A673 (cell line): ENCODE measurements at regions of chr7 and their contacts with region 1.

Region 1: GRCh38 chr7:76191783-76192275 is 9.9 kb upstream of the SRRM3 start:
- DNase-seq: peak; percentile 72
- H3K4me3 ChIP-seq: no peak overlapping the region
- H3K27ac ChIP-seq: no peak overlapping the region
- H3K4me1 ChIP-seq: peaks cover 4% of the 10 kb centered on the region
- H3K27me3 ChIP-seq: no peaks in the 10 kb centered on the region
- CTCF ChIP-seq: no peak

Region 2: DNA sequence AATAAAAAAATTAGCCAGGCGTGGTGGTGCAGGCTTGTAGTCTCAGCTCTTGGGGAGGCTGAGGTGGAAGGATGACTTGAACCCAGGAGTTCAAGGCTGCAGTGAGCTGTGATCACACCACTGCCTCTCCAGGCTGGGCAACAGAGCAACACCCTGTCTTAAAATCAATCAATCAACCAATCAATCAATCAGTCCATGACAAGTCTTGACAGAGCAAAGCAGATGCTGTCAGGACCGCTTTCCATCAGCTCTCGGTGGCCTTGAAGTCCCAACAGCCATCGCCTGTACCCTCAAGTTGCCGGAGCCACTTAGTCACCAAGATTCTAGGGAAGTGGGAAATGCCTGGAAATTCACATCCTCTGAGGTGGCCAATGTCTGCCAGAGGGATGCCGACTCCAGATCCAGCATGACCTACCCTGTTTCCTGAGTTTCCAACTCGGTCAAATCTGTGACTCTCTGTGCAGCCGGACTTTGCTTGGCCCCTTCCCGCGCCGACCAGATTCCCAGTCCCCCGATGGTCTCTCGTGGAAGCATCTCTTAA is 377.4 kb before region 1 on chr7:
- CTCF ChIA-PET with region 1: no interaction called
- POLR2A ChIA-PET with region 1: no interaction called
- intact Hi-C with region 1: no loop called
- DNase-seq: no peak
- H3K4me3 ChIP-seq: no peak overlapping the region
- H3K27ac ChIP-seq: no peak overlapping the region
- H3K4me1 ChIP-seq: no peaks in the 10 kb centered on the region
- H3K27me3 ChIP-seq: no peaks in the 10 kb centered on the region
- CTCF ChIP-seq: no peak

Region 3: GRCh38 chr7:76133164-76133775 is 58.6 kb before region 1 on chr7:
- CTCF ChIA-PET with region 1: interaction called, 15 read pairs
- POLR2A ChIA-PET with region 1: no interaction called
- intact Hi-C with region 1: no loop called
- DNase-seq: no peak
- H3K4me3 ChIP-seq: no peak overlapping the region
- H3K27ac ChIP-seq: no peak overlapping the region
- H3K4me1 ChIP-seq: peaks cover under 1% of the 10 kb centered on the region
- H3K27me3 ChIP-seq: peaks cover 2% of the 10 kb centered on the region
- CTCF ChIP-seq: no peak